GM18951 (cell line): ENCODE measurements at regions of chr1 and their contacts with region 1.

Region 1: DNA sequence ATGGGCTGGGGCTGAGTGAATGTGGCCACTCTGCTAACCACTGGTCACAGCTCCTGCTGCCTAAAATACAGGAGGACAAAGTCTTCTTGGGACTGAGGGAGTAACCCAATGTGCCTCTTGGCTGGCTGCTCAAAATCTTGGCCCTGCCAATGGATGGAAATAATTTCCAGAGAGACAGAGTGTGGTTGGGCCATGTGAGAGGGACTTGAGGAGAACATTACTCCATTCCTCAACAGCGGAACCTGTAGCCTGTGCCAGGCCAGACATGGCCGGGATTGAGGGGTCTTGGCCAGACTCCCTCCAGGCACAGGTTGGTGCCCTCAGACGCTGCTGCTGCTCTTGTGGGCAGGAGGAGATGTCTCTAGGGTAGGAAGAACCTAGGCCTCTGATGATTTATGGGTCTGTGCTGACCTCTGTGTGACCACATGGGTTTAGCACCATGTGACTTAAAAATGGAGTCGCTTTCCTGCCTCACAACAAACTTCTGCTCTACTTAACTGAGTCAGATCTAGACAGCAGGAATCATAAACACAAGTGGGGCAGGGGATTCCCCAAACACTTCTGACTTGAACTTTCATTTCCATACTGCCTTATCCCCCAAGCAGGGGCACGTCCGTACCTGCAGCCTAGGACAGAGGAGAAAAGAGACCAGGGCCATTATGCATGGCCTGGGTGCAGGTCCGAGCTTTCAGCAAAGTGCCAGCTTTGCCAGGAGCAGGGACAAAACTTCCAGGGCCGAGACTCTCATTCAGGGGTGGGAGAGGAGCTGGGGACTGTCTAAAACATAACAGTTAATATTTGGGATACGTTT is 79.2 kb downstream of the CD34 start:
- POLR2A ChIP-seq: peak; percentile 36

Region 2: DNA sequence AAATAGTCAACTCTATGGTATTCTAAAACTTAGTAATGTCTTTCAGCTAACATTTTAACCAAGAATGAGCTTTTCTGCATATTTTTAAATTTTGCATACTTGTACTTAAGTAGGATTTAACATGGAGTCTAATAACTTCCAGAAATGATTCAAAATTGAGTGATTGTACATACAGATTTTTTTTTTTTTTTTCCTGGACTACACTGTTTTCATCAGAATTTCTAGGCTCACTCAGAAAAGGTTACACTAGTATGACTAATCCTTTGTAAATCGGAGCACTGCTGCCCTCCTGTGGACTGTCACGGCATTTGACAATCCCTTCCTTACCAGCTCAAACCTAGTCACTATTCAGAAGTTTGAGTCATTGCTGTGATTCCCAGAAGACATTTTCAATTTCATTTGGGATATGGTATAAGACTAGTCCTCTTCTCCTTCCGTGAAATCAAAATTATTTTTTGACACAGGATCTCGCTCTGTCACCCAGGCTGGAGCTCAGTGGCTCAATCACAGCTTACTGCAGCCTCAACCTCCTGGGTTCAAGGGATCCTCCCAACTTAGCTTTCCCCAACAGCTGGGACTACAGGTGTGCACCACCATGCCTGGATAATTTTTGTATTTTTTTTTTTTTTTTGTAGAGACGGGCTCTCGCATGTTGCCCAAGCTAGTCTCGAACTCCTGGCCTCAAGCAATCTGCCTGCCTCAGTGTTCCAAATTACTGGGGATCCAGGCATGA is 34.3 kb before region 1 on chr1:
- in situ Hi-C with region 1: no loop called
- POLR2A ChIP-seq: no peak

Region 3: DNA sequence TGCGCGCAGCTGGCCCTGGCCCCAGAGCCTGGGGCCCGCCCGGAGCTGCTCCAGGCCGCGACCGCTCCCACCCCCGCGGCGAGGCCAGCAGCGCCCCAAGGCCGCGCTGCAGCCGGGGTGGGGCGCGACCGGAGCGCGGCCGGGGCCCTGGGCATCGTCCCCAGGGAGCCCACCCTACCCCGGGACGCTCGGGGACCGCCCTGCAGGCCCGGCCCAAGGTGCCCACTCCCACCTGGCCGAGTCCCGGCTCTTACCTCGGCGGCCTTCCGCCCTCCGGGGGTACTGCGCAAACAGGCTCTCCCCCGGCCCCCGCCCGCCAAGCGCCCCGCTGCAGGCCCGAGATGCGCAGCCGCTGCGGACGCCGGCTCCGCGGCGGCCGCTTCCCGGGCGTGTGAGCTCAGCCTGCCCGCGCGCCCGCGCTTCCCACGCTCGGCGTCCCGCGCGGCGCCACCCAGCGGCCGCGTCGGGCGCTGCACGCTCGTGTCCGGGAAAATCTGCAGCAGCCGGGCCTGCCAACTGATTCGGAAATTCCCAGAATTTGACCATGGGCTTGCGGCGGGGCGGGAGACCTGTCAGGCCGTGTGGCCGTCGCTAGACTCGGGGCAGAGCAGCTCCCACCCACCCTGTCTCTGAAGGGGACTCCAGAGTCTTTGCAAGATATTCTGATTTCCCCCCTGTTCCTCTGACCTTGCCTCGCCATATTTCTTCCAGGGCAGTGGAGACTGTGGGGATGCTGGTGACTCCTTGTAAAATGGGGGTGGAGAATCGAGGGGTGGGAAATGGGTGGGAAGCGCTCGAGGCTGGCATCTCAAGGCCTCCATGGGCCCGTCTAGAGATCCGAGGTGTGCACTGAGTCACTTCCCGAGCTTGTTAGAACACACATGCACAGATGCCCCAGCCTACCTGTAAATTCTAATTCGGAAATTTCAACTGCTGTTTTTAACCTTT is 37.3 kb after region 1 on chr1:
- in situ Hi-C with region 1: loop called (anchors 5 kb)
- POLR2A ChIP-seq: peak; percentile 67